ENCODE measurements at regions of chr2 and their contacts with region 1.

Region 1: DNA sequence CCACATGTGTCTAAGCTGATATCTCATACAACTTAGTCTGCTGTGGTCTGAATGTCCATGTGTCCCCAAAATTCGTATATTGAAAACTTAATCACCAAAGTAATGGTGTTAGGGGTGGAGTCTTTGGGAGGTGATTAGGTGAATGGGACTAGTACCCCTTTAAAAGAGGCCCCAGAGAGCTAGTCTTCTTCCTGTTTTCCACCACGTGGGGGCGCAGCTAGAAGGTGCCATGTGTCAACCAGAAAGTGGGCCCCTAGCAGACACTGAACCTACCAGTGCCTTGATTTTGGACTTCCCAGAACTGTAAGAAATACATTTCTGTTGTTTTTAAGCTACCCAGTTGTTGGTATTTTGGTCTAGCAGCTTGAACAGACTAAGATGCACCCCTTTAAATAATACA is 86.6 kb downstream of the ASB1 start:
- DNase-seq: no peak
- H3K4me3 ChIP-seq: no peak overlapping the region
- H3K27ac ChIP-seq: no peak overlapping the region
- H3K27me3 ChIP-seq: no peaks in the 10 kb centered on the region
- CTCF ChIP-seq: peak; percentile 60

Region 2: GRCh38 chr2:238379096-238379810 is 134.1 kb before region 1 on chr2:
- CTCF ChIA-PET with region 1: no interaction called
- POLR2A ChIA-PET with region 1: no interaction called
- DNase-seq: no peak
- H3K4me3 ChIP-seq: no peak overlapping the region
- H3K27ac ChIP-seq: no peak overlapping the region
- H3K27me3 ChIP-seq: no peaks in the 10 kb centered on the region
- CTCF ChIP-seq: no peak

Region 3: GRCh38 chr2:238985871-238986446 is 472.6 kb after region 1 on chr2:
- CTCF ChIA-PET with region 1: interaction called, 12 read pairs
- POLR2A ChIA-PET with region 1: no interaction called
- DNase-seq: no peak
- H3K4me3 ChIP-seq: no peak overlapping the region
- H3K27ac ChIP-seq: no peak overlapping the region
- H3K27me3 ChIP-seq: peaks cover 39% of the 10 kb centered on the region
- CTCF ChIP-seq: no peak